Calu3 (cell line): ENCODE measurements at regions of chr18 and their contacts with region 1.

Region 1: GRCh38 chr18:56382541-56382940 is 255.9 kb downstream of the TXNL1 start:
- DNase-seq: no peak
- H3K4me3 Mint-ChIP-seq: no peak overlapping the region
- H3K27ac Mint-ChIP-seq: no peak overlapping the region
- H3K4me1 Mint-ChIP-seq: no peaks in the 10 kb centered on the region
- H3K27me3 Mint-ChIP-seq: peaks cover 24% of the 10 kb centered on the region
- CTCF ChIP-seq: no peak

Region 2: DNA sequence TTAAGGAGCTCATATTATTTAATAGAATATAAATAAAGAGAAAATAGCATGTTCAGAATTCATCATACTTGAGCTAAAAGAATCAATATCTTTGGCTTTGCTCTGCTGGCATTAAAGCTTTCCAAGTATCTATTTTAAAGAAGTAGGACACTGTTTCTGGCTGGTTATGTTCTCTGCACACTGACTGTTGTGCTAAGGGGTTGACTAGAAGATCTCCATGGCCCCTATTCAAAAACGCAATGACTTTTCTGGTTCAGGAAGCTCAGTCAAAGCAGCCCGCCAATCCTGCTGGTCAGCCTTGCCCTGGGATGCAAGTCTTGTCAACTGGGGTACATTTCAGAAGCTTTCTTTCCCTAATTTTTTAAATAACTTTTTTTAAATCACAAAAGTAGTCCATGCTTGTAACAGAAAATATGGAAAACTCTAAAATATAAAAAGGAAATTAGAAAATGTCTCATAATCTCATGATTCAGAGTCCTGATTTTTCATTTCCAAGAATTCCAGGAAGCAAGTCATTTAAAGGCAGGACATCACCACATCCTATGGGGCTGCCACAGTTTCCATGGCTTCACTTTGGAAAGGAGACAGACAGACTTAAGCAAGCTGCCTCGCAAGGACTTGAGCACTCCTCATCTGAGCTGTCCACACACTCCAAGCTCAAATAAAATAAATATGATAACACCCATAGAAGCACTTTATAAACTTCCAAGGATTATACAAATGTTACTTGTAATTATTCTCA is 60.8 kb after region 1 on chr18:
- CTCF ChIA-PET with region 1: no interaction called
- intact Hi-C with region 1: loop called (anchors 10 kb)
- DNase-seq: no peak
- H3K4me3 Mint-ChIP-seq: no peak overlapping the region
- H3K27ac Mint-ChIP-seq: no peak overlapping the region
- H3K4me1 Mint-ChIP-seq: peaks cover 6% of the 10 kb centered on the region
- H3K27me3 Mint-ChIP-seq: peaks cover 71% of the 10 kb centered on the region
- CTCF ChIP-seq: no peak